Activated T-helper 2 cell treated with anti-CD3 and anti-CD28 coated beads, Interferon-gamma antibody, Interleukin-2, Interleukin-4, amounts not matched to agents 10 μg/mL and 5 μg/mL and 100 μg/mL, durations not matched to agents 14 hours and 24 hours and 36 hours (primary cell): ENCODE measurements at regions of chr6 and their contacts with region 1.

Region 1: GRCh38 chr6:25127076-25127837 is 151.9 kb upstream of the CARMIL1 start:
- DNase-seq: no peak
- H3K4me3 Mint-ChIP-seq: peak overlapping the region; percentile 41
- H3K27ac Mint-ChIP-seq: peak overlapping the region; percentile 55
- H3K4me1 Mint-ChIP-seq: peaks cover 55% of the 10 kb centered on the region
- H3K27me3 Mint-ChIP-seq: no peaks in the 10 kb centered on the region

Region 2: GRCh38 chr6:25094726-25095125 is 32.5 kb before region 1 on chr6:
- intact Hi-C with region 1: loop called (anchors 5 kb)
- DNase-seq: no peak
- H3K4me3 Mint-ChIP-seq: no peak overlapping the region
- H3K27ac Mint-ChIP-seq: peak overlapping the region; percentile 9
- H3K4me1 Mint-ChIP-seq: peaks cover 25% of the 10 kb centered on the region
- H3K27me3 Mint-ChIP-seq: no peaks in the 10 kb centered on the region